GM12878 (cell line): ENCODE measurements at regions of chr6 and their contacts with region 1.

Region 1: DNA sequence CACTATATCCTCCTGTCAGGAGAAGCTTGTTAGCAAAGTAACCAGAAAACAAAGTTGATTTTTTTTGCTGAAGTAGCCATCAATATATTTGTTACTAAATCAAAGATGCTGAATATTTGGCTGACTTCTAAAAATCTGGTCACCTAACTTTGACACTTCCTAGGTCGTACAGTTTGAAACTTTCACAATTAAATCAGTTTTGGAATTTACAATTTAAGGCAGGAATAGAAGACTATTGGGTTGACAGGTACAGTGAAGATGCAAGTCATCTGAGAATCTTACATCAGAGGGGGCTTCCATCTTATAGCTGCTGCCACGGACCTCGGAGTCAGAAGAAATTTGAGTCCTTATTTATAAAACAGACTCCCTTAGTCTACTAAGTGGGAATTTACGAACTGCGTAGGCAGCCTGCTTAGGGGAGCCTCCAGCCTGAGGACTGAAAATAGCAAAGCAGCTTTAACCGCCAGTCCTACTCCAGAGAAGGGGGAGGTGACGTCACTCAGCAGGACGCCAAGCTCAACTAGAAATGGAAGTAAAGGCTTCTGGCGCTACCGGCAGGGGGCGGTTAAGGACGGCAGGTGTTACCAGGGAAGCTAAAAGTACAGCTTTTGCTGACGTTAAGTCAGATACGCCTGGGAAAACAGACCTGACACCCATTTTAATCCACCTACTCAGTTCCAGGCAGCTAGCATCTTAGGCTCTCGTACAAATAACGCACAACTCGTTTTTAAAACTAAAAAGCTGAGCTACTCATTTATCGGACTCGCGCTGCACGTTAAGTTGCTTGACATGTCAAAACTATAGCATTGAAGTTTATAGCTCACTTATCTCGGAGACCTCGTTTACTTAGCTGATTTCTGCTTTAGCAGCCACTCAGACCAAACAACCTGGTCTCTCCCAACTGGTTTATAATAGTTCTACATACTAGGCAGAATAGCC is 61.1 kb upstream of the HFE start:
- DNase-seq: peak; percentile 89
- ATAC-seq: peak; percentile 53
- H3K4me3 ChIP-seq: peak overlapping the region; percentile 63
- H3K27ac ChIP-seq: peak overlapping the region; percentile 95
- H3K4me1 ChIP-seq: peaks cover 12% of the 10 kb centered on the region
- H3K27me3 ChIP-seq: no peaks in the 10 kb centered on the region
- CTCF ChIP-seq: peak; percentile 82 to 95 (median 94)
- EP300 ChIP-seq: peak in 1 of 2 experiments; percentile 51; a peak in 2 of 4 replicates
- POLR2A ChIP-seq: no peak
- RAD21 ChIP-seq: peak; percentile 54

Region 2: DNA sequence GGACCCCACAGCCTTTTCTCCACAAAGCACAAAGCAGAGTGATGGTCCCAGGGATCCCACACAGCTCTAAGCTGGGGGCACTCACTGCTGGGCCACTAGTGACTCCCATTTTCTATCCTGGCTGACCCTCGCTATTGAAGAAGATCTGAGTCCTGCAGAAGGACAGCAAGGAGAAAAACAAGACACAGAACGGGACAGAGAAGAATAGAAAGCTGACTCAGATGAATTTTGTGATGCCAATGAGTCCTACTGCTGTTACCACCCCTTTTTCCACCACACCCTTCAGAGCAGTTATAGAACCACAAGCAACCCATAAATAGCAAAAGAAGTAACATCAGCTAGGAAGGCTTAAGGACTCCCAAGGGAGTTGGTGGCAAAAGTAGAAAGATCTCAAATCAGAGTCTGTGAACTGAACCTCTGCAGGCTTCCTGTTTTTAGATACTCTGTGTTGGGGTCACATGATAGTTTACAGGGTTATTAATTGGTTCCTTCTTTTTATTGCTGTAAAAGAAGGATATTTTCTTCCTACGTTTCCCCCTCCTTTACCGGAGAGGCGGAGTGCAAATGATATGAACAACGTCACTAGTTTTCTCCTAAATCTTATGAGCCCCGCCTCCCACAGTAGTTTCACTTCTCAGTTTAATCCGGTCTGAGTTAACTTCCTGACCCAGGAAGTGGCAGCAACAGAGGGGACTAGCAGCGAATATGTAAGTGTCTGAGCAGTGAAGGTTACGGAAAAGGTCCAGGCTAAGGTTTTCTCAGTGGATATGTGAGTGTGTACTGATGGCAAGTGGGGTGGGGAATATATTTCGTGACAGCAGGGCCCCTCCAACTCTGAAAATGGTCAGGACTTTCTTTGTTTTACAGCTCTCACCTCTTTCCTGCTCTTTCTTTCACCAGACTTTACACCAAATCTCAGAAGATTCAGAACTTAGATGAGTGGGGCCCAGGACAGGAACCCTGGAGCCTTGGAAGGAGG is 63.7 kb before region 1 on chr6 and contains the start of gene TRIM38:
- CTCF ChIA-PET with region 1: interaction called, 3 read pairs
- POLR2A ChIA-PET with region 1: interaction called, 13 read pairs
- RAD21 ChIA-PET with region 1: interaction called, 3 read pairs
- SMC1A ChIA-PET with region 1: interaction called, 5 read pairs
- in situ Hi-C with region 1: no loop called
- intact Hi-C with region 1: no loop called
- DNase-seq: peak; percentile 85
- ATAC-seq: peak; percentile 84
- H3K4me3 ChIP-seq: peak within 1 kb of the TSS; percentile 99
- H3K27ac ChIP-seq: peak within 1 kb of the TSS; percentile 99
- H3K4me1 ChIP-seq: peaks cover 33% of the 10 kb centered on the region
- H3K27me3 ChIP-seq: no peaks in the 10 kb centered on the region
- CTCF ChIP-seq: no peak
- EP300 ChIP-seq: peak; percentile 46 to 64; a peak in 1 of 4 replicates
- POLR2A ChIP-seq: peak; percentile 91
- RAD21 ChIP-seq: no peak
- polyA plus RNA-seq, gene TRIM38: 4.5 to 5.9 TPM

Region 3: DNA sequence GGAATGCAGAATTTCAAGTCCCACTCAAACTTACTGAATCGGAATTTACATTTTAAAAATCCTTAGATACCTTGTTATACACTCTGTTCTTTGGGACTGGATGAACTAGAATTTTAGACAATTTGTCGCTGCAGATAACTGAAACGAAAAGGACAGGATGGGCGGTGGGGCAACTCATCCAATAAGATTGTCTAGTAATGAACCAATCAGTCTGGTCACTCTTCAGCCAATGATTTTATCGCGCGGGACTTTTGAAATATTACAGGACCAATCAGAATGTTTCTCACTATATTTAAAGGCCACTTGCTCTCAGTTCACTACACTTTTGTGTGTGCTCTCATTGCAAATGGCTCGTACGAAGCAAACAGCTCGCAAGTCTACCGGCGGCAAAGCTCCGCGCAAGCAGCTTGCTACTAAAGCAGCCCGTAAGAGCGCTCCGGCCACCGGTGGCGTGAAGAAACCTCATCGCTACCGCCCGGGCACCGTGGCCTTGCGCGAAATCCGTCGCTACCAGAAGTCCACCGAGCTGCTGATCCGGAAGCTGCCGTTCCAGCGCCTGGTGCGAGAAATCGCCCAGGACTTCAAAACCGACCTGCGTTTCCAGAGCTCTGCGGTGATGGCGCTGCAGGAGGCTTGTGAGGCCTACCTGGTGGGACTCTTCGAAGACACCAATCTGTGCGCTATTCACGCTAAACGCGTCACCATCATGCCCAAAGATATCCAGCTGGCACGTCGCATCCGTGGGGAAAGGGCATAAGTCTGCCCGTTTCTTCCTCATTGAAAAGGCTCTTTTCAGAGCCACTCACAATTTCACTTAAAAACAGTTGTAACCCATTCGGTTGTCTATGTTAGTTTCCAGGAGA is 19.1 kb after region 1 on chr6:
- CTCF ChIA-PET with region 1: interaction called, 18 read pairs
- POLR2A ChIA-PET with region 1: interaction called, 128 read pairs
- RAD21 ChIA-PET with region 1: interaction called, 38 read pairs
- SMC1A ChIA-PET with region 1: interaction called, 39 read pairs
- in situ Hi-C with region 1: no loop called
- intact Hi-C with region 1: loop called (anchors 2 kb)
- DNase-seq: peak; percentile 99
- ATAC-seq: peak; percentile 79
- H3K4me3 ChIP-seq: peak overlapping the region; percentile 64
- H3K27ac ChIP-seq: peak overlapping the region; percentile 97
- H3K4me1 ChIP-seq: peaks cover 21% of the 10 kb centered on the region
- H3K27me3 ChIP-seq: no peaks in the 10 kb centered on the region
- CTCF ChIP-seq: 0 out of 6 replicates have a peak, but pooled peaks of 2 of the 3 experiments have one; percentile 13 to 19
- EP300 ChIP-seq: no peak
- POLR2A ChIP-seq: peak; percentile 98
- RAD21 ChIP-seq: no peak

Region 4: DNA sequence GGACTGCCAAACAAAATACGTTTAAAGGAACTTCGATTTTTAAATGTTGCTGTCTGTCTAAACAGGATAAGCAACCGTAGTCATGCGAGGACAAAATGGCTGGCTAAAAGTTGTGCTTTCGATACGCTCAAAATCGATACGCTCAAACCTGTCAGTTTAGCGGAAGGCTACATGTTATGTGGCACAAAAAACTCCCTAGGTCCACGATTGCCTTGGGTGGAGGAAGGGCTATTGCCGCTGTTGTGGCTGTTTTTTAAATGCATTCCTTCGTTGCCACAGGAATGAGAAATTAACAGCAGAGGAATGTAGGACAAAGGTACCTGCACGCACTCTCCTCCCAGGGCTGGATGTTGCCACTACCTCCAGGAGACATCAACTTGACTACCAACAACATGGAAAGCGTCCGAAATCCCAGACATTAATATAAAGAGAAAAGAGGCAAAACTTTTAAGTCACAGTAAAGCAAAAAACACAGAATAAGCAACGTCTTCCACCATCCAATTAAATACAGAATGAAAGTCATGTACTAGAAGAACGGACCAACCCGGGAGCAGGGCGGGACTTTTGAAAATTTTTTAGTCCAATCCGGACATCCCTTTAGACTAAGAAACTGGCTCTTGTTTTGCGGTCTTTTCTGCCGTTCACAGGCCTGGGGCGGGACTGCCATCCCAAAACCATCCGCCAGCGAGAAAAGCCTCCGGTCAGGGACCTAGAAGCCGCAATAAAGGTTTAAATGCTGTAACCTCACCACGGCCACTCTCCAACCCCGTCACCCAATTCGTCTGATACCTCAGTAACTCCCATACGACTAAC is 28.9 kb after region 1 on chr6:
- CTCF ChIA-PET with region 1: interaction called, 117 read pairs
- POLR2A ChIA-PET with region 1: interaction called, 12 read pairs
- RAD21 ChIA-PET with region 1: interaction called, 7 read pairs
- SMC1A ChIA-PET with region 1: interaction called, 13 read pairs
- in situ Hi-C with region 1: no loop called
- intact Hi-C with region 1: no loop called
- DNase-seq: peak; percentile 88
- ATAC-seq: peak; percentile 71
- H3K4me3 ChIP-seq: peak overlapping the region; percentile 75
- H3K27ac ChIP-seq: peak overlapping the region; percentile 93
- H3K4me1 ChIP-seq: peaks cover 4% of the 10 kb centered on the region; the same call in 1 of the 2 replicates
- H3K27me3 ChIP-seq: no peaks in the 10 kb centered on the region
- CTCF ChIP-seq: peak in 1 of 3 experiments; percentile 26; a peak in 1 of 6 replicates
- EP300 ChIP-seq: no peak
- POLR2A ChIP-seq: peak; percentile 67
- RAD21 ChIP-seq: no peak

Region 5: GRCh38 chr6:26065952-26066380 is 39.8 kb after region 1 on chr6:
- CTCF ChIA-PET with region 1: interaction called, 117 read pairs
- POLR2A ChIA-PET with region 1: interaction called, 7 read pairs
- RAD21 ChIA-PET with region 1: interaction called, 7 read pairs
- SMC1A ChIA-PET with region 1: interaction called, 11 read pairs
- in situ Hi-C with region 1: no loop called
- intact Hi-C with region 1: no loop called
- DNase-seq: peak; percentile 73
- ATAC-seq: peak; percentile 92
- H3K4me3 ChIP-seq: 0 out of 2 replicates have a peak overlapping the region, but pooled peaks have one; percentile 24
- H3K27ac ChIP-seq: no peak overlapping the region; the same call in 1 of the 2 replicates
- H3K4me1 ChIP-seq: no peaks in the 10 kb centered on the region
- H3K27me3 ChIP-seq: no peaks in the 10 kb centered on the region
- CTCF ChIP-seq: peak; percentile 88 to 98 (median 89); a peak in 5 of 6 replicates
- EP300 ChIP-seq: no peak
- POLR2A ChIP-seq: no peak
- RAD21 ChIP-seq: peak; percentile 94

Region 6: DNA sequence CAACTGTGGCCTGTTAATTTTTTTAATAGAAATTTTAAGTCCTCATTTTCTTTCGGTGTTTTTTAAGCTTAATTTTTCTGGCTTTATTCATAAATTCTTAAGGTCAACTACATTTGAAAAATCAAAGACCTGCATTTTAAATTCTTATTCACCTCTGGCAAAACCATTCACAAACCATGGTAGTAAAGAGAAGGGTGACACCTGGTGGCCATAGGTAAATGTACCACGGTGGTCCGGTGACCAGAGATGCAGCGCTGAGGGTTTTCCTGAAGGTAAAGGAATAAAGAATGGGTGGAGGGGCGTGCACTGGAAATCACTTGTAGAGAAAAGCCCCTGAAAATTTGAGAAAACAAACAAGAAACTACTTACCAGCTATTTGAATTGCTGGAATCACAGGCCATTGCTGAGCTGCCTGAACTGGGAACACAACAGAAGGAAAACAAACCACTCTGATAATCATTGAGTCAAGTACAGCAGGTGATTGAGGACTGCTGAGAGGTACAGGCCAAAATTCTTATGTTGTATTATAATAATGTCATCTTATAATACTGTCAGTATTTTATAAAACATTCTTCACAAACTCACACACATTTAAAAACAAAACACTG is 71.2 kb after region 1 on chr6:
- CTCF ChIA-PET with region 1: interaction called, 22 read pairs
- POLR2A ChIA-PET with region 1: interaction called, 3 read pairs
- RAD21 ChIA-PET with region 1: interaction called, 17 read pairs
- SMC1A ChIA-PET with region 1: interaction called, 11 read pairs
- in situ Hi-C with region 1: no loop called
- intact Hi-C with region 1: no loop called
- DNase-seq: no peak
- ATAC-seq: peak; percentile 92
- H3K4me3 ChIP-seq: no peak overlapping the region
- H3K27ac ChIP-seq: no peak overlapping the region
- H3K4me1 ChIP-seq: peaks cover 4% of the 10 kb centered on the region
- H3K27me3 ChIP-seq: no peaks in the 10 kb centered on the region
- CTCF ChIP-seq: peak; percentile 54 to 82 (median 65); a peak in 5 of 6 replicates
- EP300 ChIP-seq: no peak
- POLR2A ChIP-seq: no peak
- RAD21 ChIP-seq: peak; percentile 96

Region 7: DNA sequence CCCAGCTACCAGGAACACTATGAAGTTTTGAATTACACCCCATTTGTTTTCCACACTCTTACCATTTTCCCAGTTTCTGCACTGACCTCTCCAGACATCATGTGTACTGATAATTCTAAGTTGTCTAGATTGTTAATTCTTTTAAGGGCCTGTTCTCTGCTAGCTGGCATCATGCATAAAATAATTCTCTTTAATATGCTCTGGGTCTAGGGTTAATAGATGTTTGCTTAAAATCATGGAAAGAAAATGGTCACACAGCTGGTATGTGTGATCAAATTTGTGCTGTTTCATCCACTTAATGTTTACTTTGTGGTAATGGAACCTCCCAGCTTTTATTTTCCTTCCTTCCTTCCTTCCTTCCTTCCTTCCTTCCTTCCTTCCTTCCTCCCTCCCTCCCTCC is 110.2 kb after region 1 on chr6:
- CTCF ChIA-PET with region 1: no interaction called
- POLR2A ChIA-PET with region 1: no interaction called
- RAD21 ChIA-PET with region 1: no interaction called
- SMC1A ChIA-PET with region 1: no interaction called
- in situ Hi-C with region 1: no loop called
- intact Hi-C with region 1: no loop called
- DNase-seq: no peak
- ATAC-seq: no peak
- H3K4me3 ChIP-seq: no peak overlapping the region
- H3K27ac ChIP-seq: no peak overlapping the region
- H3K4me1 ChIP-seq: peaks cover 14% of the 10 kb centered on the region
- H3K27me3 ChIP-seq: no peaks in the 10 kb centered on the region
- CTCF ChIP-seq: no peak
- EP300 ChIP-seq: no peak
- POLR2A ChIP-seq: no peak
- RAD21 ChIP-seq: no peak

Region 8: DNA sequence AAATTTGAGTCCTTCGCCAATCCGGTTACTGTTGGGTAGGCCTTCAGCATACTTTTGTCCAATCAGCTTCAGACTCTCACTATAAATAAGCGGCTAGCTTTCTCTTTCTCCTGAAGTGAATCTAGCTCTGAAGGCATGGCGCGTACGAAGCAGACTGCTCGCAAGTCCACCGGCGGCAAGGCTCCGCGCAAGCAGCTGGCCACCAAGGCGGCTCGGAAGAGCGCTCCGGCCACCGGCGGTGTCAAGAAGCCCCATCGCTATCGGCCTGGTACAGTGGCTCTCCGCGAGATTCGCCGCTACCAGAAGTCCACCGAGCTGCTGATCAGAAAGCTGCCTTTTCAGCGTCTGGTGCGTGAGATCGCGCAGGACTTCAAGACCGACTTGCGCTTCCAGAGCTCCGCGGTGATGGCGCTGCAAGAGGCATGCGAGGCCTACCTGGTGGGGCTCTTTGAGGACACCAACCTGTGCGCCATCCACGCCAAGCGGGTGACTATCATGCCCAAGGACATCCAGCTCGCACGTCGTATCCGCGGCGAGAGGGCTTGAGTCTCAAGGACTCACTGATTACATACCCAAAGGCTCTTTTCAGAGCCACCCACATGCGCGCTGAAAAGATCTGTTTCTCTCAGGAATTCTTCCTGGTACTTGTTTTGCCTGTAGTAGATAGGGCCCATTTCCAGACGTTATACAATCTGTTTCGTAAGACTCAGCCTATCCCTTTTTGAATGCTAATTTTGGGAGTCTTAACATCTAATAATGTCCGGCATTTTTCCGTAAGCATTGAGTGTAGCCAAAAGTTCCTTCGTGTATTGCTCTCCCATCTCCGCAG is 1784.0 kb after region 1 on chr6:
- CTCF ChIA-PET with region 1: no interaction called
- POLR2A ChIA-PET with region 1: interaction called, 4 read pairs
- RAD21 ChIA-PET with region 1: no interaction called
- SMC1A ChIA-PET with region 1: no interaction called
- in situ Hi-C with region 1: loop called (anchors 5 kb)
- intact Hi-C with region 1: loop called (anchors 2 kb)
- DNase-seq: peak; percentile 98
- ATAC-seq: peak; percentile 43
- H3K4me3 ChIP-seq: peak overlapping the region; percentile 74
- H3K27ac ChIP-seq: peak overlapping the region; percentile 82
- H3K4me1 ChIP-seq: peaks cover 25% of the 10 kb centered on the region
- H3K27me3 ChIP-seq: no peaks in the 10 kb centered on the region
- CTCF ChIP-seq: peak in 1 of 3 experiments; percentile 19; a peak in 2 of 6 replicates
- EP300 ChIP-seq: no peak
- POLR2A ChIP-seq: peak; percentile 95
- RAD21 ChIP-seq: no peak